Gastrocnemius medialis (tissue), 4 donors: ENCODE measurements at regions of chr7 and their contacts with region 1.

Region 1: GRCh38 chr7:47283507-47284131 is 298.3 kb downstream of the TNS3 start:
- DNase-seq: no peak
- ATAC-seq: no peak
- H3K4me3 ChIP-seq: no peak overlapping the region
- H3K27ac ChIP-seq: no peak overlapping the region
- H3K4me1 ChIP-seq: peaks cover 0 to 3% of the 10 kb centered on the region in 2 donors
- H3K27me3 ChIP-seq: no peaks in the 10 kb centered on the region
- CTCF ChIP-seq: no peak
- POLR2A ChIP-seq: no peak

Region 2: DNA sequence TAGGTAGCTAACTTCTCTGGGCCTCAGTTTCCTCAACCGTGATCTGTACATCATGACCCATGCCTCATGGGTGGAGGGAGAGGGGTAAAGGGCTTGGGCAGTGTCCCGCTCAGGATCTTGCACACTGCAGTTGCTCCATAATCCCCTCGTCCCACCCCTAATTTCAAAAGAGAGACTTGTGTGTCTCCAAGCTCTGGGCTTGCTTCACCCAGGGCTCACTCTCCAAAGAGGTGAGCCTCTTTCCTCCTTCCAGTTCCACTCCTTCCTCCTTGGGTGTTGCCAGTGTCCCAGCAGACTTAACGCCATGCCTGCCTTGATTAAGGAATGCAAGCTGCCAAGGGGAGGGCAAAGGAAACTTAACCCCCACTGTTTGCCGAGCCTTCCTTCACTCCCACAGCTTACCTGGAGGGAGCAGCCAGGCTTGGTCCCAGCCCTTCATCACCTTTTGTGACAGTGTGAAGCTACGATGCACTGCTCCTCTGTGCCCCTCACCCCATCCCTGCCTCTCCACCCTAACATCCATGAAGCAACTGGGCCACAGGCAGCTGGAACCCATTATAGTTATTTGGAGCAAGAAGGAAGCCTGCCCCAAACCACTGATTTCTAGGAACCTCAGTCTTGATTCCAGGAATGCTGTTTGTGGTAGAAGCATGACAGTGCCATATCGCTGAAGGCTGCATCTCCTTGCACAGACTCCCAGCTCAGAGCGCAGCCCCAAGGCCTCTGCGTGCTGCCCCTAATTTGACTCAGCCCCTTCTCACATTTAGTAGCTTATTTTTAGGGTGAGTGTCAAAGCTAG is 65.0 kb before region 1 on chr7:
- in situ Hi-C with region 1: no loop called
- intact Hi-C with region 1: no loop called
- DNase-seq: no peak
- ATAC-seq: no peak
- H3K4me3 ChIP-seq: no peak overlapping the region
- H3K27ac ChIP-seq: no peak overlapping the region
- H3K4me1 ChIP-seq: no peaks in the 10 kb centered on the region
- H3K27me3 ChIP-seq: no peaks in the 10 kb centered on the region
- CTCF ChIP-seq: no peak
- POLR2A ChIP-seq: no peak

Region 3: DNA sequence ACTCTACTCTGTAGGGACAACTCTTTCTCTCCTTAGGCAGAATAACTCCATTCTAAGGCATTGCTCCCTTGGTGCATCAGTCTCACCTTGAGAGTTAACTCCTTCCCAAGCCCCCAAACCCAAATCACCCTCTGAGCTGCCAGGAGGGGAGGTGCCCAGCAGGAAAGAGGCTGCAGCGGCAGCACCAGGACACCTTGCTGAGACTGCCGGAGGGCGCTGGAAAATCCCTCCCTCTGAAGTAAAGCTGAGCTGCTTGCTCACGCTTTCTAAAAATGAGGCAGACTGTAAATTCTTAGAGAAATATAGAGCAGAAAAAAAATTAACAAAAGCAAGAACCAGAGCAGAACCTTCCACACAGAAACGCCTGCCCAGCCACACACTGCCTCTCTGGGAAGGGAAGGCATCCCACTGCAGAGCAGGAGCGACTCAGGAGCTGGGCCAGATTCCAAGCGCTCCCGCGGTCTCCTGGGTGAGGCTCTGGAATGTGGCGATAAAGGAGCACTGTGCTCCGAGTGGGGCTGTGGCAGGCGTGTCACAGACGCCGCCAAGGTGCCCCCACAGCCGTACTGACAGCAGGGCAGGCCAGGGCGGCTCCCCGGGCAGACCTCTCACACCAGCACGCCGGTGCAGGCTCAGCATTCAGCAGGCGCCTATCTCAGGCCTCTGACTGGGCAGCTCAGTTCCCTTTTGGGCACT is 96.2 kb after region 1 on chr7:
- in situ Hi-C with region 1: no loop called
- intact Hi-C with region 1: loop called (anchors 5 kb)
- DNase-seq: peak in 1 of 2 donors; percentile 40
- ATAC-seq: peak in 1 of 2 donors; percentile 39
- H3K4me3 ChIP-seq: peak overlapping the region in 2 of 4 donors; percentile 9 to 19
- H3K27ac ChIP-seq: peak overlapping the region in 2 of 4 donors; percentile 2 to 32
- H3K4me1 ChIP-seq: peaks cover 40 to 44% of the 10 kb centered on the region in 2 donors
- H3K27me3 ChIP-seq: no peaks in the 10 kb centered on the region
- CTCF ChIP-seq: no peak
- POLR2A ChIP-seq: no peak